ENCODE measurements at regions of chr5 and their contacts with region 1.

Region 1: GRCh38 chr5:56270568-56271392 is 37.6 kb upstream of the ANKRD55 start:
- DNase-seq: peak; percentile 76 to 84 (median 78)
- ATAC-seq: peak; percentile 100
- H3K4me3 ChIP-seq: no peak overlapping the region
- H3K27ac ChIP-seq: no peak overlapping the region
- H3K4me1 ChIP-seq: 0 out of 5 replicates have a peak, but pooled peaks cover 0 to 3% of the 10 kb centered on the region in 2 experiments
- H3K27me3 ChIP-seq: no peaks in the 10 kb centered on the region
- CTCF ChIP-seq: peak; percentile 94 to 97 (median 96)
- EP300 ChIP-seq: no peak
- POLR2A ChIP-seq: no peak
- RAD21 ChIP-seq: peak; percentile 99

Region 2: DNA sequence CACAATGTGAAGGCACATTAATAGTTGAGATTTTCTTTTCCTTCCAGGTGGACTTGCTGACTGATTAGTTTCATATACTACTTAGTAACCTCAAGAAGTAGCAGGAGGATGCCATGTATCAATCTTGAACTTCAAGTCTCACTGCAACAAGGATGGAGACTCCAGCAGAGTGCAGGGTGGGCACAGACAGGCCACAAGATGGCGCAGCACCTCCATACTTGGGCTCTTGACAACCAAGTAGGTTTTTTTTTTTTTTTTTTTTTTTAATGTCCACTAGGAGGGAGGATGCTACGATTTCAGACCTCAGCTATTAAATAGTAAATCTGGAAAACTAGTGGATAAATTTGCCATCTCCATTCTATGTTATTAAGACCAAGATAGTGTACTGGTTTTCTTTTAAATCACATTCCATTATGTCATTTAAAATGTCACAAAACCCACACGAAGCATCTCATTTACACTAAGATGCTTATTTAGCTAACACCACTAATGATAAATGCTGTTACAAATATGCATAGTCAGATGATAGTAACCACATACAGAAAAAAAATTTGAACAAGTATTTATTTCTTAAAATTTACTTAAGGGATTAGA is 334.6 kb before region 1 on chr5:
- CTCF ChIA-PET with region 1: interaction called, 16 read pairs
- POLR2A ChIA-PET with region 1: no interaction called
- in situ Hi-C with region 1: no loop called
- intact Hi-C with region 1: loop called (anchors 1 kb)
- DNase-seq: peak; percentile 68 to 86 (median 73)
- ATAC-seq: peak; percentile 96
- H3K4me3 ChIP-seq: no peak overlapping the region
- H3K27ac ChIP-seq: no peak overlapping the region
- H3K4me1 ChIP-seq: no peaks in the 10 kb centered on the region; a peak in 1 of 5 replicates
- H3K27me3 ChIP-seq: no peaks in the 10 kb centered on the region
- CTCF ChIP-seq: peak; percentile 91 to 97 (median 97)
- EP300 ChIP-seq: no peak
- POLR2A ChIP-seq: no peak
- RAD21 ChIP-seq: peak; percentile 87

Region 3: GRCh38 chr5:56303515-56303914 is 32.7 kb after region 1 on chr5:
- CTCF ChIA-PET with region 1: interaction called, 8 read pairs
- POLR2A ChIA-PET with region 1: interaction called, 3 read pairs
- in situ Hi-C with region 1: no loop called
- intact Hi-C with region 1: loop called (anchors 1 kb)
- DNase-seq: peak; percentile 19 to 63 (median 32)
- ATAC-seq: peak; percentile 97
- H3K4me3 ChIP-seq: no peak overlapping the region
- H3K27ac ChIP-seq: no peak overlapping the region
- H3K4me1 ChIP-seq: peaks cover 0 to 3% of the 10 kb centered on the region in 2 experiments; a peak in 1 of 5 replicates
- H3K27me3 ChIP-seq: no peaks in the 10 kb centered on the region
- CTCF ChIP-seq: peak; percentile 47 to 66 (median 55)
- EP300 ChIP-seq: no peak
- POLR2A ChIP-seq: no peak
- RAD21 ChIP-seq: peak; percentile 53 to 80

Region 4: GRCh38 chr5:56415356-56415765 is 144.6 kb after region 1 on chr5:
- CTCF ChIA-PET with region 1: no interaction called
- POLR2A ChIA-PET with region 1: no interaction called
- in situ Hi-C with region 1: no loop called
- intact Hi-C with region 1: loop called (anchors 10 kb)
- DNase-seq: peak in 3 of 4 experiments; percentile 12 to 75 (median 56)
- ATAC-seq: peak; percentile 97
- H3K4me3 ChIP-seq: no peak overlapping the region
- H3K27ac ChIP-seq: peak overlapping the region; percentile 57; the same call in 2 of the 3 replicates
- H3K4me1 ChIP-seq: peaks cover 0 to 15% of the 10 kb centered on the region in 2 experiments; a peak in 3 of 5 replicates
- H3K27me3 ChIP-seq: no peaks in the 10 kb centered on the region
- CTCF ChIP-seq: no peak
- EP300 ChIP-seq: peak; percentile 51
- POLR2A ChIP-seq: no peak
- RAD21 ChIP-seq: peak; percentile 33 to 41; a peak in 2 of 4 replicates

Region 5: DNA sequence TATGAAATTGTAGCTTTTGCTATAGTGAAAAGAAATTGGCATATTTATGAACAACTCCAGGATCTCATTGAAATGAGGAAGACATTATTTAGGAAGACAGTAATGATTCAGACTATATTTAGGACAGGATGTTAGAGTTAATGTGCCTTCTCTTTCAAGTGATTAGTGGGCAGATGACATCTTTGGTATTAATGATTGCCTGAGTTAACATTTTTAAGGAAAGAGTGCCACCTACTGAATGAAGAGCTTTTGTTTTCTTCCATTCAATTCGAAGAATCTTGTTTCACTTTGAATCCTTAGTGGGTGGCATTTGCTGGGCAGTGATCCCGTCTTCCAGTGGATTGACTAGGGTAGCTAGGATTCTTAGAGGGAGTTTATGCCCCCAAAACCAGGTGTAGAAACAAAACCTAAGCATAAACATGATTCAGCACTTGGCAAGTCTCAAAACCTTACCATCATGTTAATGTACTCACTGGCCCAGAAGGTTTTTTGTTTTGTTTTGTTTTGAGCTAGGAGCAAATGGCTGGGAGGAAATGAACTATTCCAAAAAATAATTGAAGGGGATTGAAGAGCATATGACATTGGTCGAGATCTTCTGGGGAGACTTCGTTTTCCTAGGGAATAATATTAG is 567.7 kb after region 1 on chr5:
- CTCF ChIA-PET with region 1: interaction called, 32 read pairs
- POLR2A ChIA-PET with region 1: no interaction called
- in situ Hi-C with region 1: loop called (anchors 5 kb)
- intact Hi-C with region 1: loop called (anchors 1 kb)
- DNase-seq: peak in 1 of 4 experiments; percentile 33
- ATAC-seq: peak; percentile 56; the same call in 2 of the 3 replicates
- H3K4me3 ChIP-seq: no peak overlapping the region
- H3K27ac ChIP-seq: no peak overlapping the region
- H3K4me1 ChIP-seq: peaks cover 0 to 8% of the 10 kb centered on the region in 2 experiments; a peak in 1 of 5 replicates
- H3K27me3 ChIP-seq: no peaks in the 10 kb centered on the region
- CTCF ChIP-seq: peak; percentile 30 to 72 (median 54); a peak in 5 of 6 replicates
- EP300 ChIP-seq: no peak
- POLR2A ChIP-seq: no peak
- RAD21 ChIP-seq: peak; percentile 88 to 90

Region 6: DNA sequence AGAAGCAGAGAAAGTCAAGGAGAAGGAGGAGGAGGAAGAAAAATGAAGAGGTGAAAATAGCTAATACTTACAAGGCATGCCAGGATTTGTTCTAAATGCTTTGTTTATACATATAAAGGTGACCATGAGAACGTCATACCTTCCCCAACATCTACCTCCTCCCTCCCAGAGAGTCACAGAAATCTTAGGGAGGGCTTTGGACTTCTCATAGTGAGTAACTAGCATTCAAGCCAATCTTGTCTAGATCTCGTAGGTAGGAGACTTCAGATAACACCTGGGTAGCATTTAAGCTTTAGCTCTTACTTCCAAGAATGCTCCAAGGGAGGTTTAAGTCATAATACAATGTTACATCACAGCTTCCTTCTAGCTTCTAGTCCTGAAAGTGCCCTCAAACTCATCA is 866.6 kb after region 1 on chr5:
- CTCF ChIA-PET with region 1: interaction called, 6 read pairs
- POLR2A ChIA-PET with region 1: no interaction called
- in situ Hi-C with region 1: no loop called
- intact Hi-C with region 1: loop called (anchors 2 kb)
- DNase-seq: peak in 1 of 4 experiments; percentile 8
- ATAC-seq: no peak
- H3K4me3 ChIP-seq: no peak overlapping the region
- H3K27ac ChIP-seq: no peak overlapping the region
- H3K4me1 ChIP-seq: peaks cover 0 to 2% of the 10 kb centered on the region in 2 experiments; a peak in 2 of 5 replicates
- H3K27me3 ChIP-seq: peaks cover 5 to 17% of the 10 kb centered on the region in 2 experiments; a peak in 3 of 5 replicates
- CTCF ChIP-seq: no peak
- EP300 ChIP-seq: no peak
- POLR2A ChIP-seq: no peak
- RAD21 ChIP-seq: no peak

Region 7: DNA sequence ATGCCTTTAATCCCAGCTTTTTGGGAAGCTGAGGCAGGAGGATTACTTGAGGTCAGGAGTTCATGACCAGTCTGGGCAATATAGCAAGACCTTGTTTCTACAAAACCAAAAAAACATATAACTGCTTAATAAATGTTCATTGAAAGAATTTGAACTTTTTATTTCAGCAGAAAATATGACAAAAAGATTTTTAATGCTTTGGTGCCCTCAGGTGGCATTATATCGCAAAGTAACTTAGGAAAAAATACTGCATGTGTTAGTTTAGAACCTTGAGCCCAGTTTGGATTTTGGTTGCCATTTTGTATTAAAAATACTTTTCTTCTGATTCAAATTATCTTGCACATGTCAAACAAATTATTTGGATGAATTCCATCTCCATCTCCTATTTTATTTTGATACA is 1006.3 kb after region 1 on chr5:
- CTCF ChIA-PET with region 1: no interaction called
- POLR2A ChIA-PET with region 1: no interaction called
- in situ Hi-C with region 1: no loop called
- intact Hi-C with region 1: loop called (anchors 10 kb)
- DNase-seq: peak in 2 of 4 experiments; percentile 12 to 13
- ATAC-seq: no peak
- H3K4me3 ChIP-seq: no peak overlapping the region
- H3K27ac ChIP-seq: no peak overlapping the region
- H3K4me1 ChIP-seq: no peaks in the 10 kb centered on the region
- H3K27me3 ChIP-seq: no peaks in the 10 kb centered on the region
- CTCF ChIP-seq: peak in 2 of 3 experiments; percentile 13 to 57; a peak in 2 of 6 replicates
- EP300 ChIP-seq: no peak
- POLR2A ChIP-seq: no peak
- RAD21 ChIP-seq: peak; percentile 58 to 70

Measured in K562 (cell line).